Activated CD8-positive, alpha-beta T cell treated with anti-CD3 and anti-CD28 coated beads, Interleukin-2, amount 10 ng/mL, durations not matched to agents 7 days and 5 days (primary cell): ENCODE measurements at regions of chr7 and their contacts with region 1.

Region 1: GRCh38 chr7:50092579-50093491 is at the start of gene ZPBP:
- DNase-seq: peak; percentile 71
- ATAC-seq: peak; percentile 80
- H3K4me3 Mint-ChIP-seq: peak within 1 kb of the TSS; percentile 80
- H3K27ac Mint-ChIP-seq: peak within 1 kb of the TSS; percentile 88
- H3K4me1 Mint-ChIP-seq: peaks cover 14% of the 10 kb centered on the region
- H3K27me3 Mint-ChIP-seq: peaks cover 14% of the 10 kb centered on the region
- total RNA-seq, gene ZPBP: not detected

Region 2: GRCh38 chr7:50068961-50069551 is 23.8 kb before region 1 on chr7:
- CTCF ChIA-PET with region 1: interaction called, 36 read pairs
- POLR2A ChIA-PET with region 1: no interaction called
- DNase-seq: peak; percentile 60
- ATAC-seq: peak; percentile 80
- H3K4me3 Mint-ChIP-seq: peak overlapping the region; percentile 83
- H3K27ac Mint-ChIP-seq: peak overlapping the region; percentile 92
- H3K4me1 Mint-ChIP-seq: peaks cover 21% of the 10 kb centered on the region
- H3K27me3 Mint-ChIP-seq: peaks cover 5% of the 10 kb centered on the region

Region 3: GRCh38 chr7:50112250-50112975 is 19.6 kb after region 1 on chr7:
- CTCF ChIA-PET with region 1: interaction called, 21 read pairs
- POLR2A ChIA-PET with region 1: no interaction called
- DNase-seq: no peak
- ATAC-seq: no peak
- H3K4me3 Mint-ChIP-seq: no peak overlapping the region
- H3K27ac Mint-ChIP-seq: no peak overlapping the region
- H3K4me1 Mint-ChIP-seq: peaks cover 2% of the 10 kb centered on the region
- H3K27me3 Mint-ChIP-seq: peaks cover 29% of the 10 kb centered on the region

Region 4: DNA sequence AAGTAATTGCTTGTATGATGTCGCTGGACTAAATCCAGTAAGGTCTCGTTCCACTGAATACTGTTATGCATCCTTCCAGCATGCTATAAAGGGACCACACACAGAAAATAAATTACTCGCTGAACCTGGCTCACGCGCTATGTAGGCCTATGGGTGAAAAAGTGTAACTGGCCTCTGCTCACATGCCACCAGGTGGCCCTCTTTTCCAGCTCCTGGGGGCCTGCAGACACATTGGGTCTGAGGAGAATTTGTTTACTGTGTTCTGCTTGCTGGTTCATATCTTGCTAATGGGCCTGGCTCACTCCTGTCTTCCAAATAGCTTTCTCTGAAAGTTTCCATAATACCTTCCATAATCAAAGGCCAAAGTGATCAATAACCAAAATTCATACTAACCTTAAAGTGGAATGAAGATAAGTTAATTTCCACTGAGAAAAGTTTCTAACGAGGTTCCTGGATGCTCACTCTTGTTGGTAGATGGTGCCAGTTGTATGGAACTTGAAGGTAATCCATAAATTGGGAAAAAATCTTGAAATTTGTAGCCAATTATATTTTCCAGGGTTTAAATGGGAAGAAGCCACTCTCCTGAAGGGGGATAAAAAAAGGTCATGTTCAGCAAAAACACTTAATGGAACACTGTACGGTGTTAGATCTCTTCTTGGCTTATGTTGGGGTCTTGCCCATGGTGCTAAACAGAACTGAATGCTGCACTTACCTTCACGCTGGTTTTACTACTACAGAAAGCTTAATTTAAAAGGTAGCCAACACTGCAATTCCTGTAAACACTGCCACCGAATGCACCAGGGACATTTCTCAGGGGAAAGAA is 27.2 kb after region 1 on chr7:
- CTCF ChIA-PET with region 1: interaction called, 12 read pairs
- POLR2A ChIA-PET with region 1: no interaction called
- DNase-seq: peak; percentile 58
- ATAC-seq: peak; percentile 73
- H3K4me3 Mint-ChIP-seq: no peak overlapping the region
- H3K27ac Mint-ChIP-seq: no peak overlapping the region
- H3K4me1 Mint-ChIP-seq: no peaks in the 10 kb centered on the region
- H3K27me3 Mint-ChIP-seq: peaks cover 16% of the 10 kb centered on the region